Vagina (tissue), 2 donors: ENCODE measurements at regions of chr11 and their contacts with region 1.

Region 1: DNA sequence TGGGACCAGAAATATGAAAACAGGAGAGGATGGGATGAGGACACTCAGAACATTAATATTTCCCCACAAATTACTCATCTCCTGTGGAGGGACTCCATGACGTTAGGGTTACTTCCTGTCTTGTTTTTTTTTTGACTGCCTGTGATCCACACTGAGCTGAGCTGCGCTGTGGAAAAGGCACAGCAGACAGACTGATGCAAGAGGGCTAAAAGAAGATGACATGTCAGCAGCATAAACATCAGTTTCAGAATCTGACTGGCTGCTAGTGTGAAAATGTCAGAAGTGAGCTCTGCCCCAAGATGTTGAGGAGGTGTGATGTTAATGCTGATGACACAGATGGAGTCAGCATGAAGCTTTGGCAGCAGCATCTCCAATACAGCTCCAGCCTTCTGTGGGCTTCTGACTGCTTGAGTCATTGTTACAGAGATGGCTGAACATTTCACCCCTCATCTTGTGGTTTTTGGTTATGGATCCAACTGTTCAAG is 286.8 kb downstream of the BLID start:
- DNase-seq: no peak
- H3K4me3 ChIP-seq: no peak overlapping the region
- H3K27ac ChIP-seq: peak overlapping the region; percentile 3
- H3K4me1 ChIP-seq: no peaks in the 10 kb centered on the region
- H3K27me3 ChIP-seq: no peaks in the 10 kb centered on the region
- CTCF ChIP-seq: no peak
- POLR2A ChIP-seq: no peak

Region 2: DNA sequence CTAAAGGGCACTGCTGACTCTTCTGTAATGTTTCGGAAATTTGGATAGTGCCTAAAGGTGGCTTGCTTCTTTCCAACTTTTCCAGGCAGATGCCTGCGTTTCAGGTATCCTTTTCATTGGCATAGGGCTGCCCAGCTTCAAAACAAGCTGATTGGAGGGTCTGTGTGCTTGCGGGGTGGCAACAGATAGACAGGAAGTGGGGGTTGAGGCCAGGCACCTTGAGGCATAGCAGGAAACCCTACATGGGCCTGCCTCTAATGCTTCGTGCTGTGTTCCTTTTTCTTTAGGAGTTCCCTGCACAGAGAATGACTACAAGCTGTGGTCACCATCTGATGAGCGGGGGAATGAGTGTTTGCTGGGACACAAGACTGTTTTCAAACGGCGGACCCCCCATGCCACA is 284.2 kb before region 1 on chr11:
- intact Hi-C with region 1: loop called (anchors 5 kb)
- DNase-seq: peak in 1 of 2 donors; percentile 78
- H3K4me3 ChIP-seq: no peak overlapping the region
- H3K27ac ChIP-seq: no peak overlapping the region
- H3K4me1 ChIP-seq: no peaks in the 10 kb centered on the region
- H3K27me3 ChIP-seq: no peaks in the 10 kb centered on the region
- CTCF ChIP-seq: no peak
- POLR2A ChIP-seq: no peak

Region 3: DNA sequence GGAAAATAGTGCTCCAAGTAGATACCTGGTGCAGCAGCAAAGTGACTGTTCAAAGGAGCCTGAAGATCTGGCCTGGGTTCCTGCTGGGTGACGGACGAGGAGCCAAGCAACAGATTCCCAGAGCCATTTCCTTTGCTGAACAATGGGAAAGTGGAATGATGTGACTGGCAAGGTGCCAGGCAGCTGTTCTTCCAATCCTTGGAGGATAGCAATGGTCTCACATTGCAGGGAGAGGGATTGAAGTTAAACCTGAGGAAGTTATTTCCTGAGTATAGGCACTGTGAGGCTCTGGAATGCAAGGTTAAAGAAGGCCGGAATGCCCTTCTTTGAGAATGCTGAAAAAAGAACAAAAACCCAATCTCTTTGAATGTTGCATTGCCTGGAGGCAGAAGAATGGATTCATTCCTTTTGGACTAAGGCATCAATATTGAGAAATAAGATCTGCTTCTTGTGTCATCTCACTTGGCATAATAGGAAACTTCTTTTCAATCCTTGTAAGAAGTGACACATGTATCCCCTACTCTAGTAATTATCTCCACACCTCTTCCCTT is 63.0 kb after region 1 on chr11:
- intact Hi-C with region 1: no loop called
- DNase-seq: no peak
- H3K4me3 ChIP-seq: no peak overlapping the region
- H3K27ac ChIP-seq: no peak overlapping the region
- H3K4me1 ChIP-seq: no peaks in the 10 kb centered on the region
- H3K27me3 ChIP-seq: no peaks in the 10 kb centered on the region
- CTCF ChIP-seq: no peak
- POLR2A ChIP-seq: no peak

Region 4: GRCh38 chr11:121996574-121996973 is 167.4 kb after region 1 on chr11:
- intact Hi-C with region 1: no loop called
- DNase-seq: no peak
- H3K4me3 ChIP-seq: no peak overlapping the region
- H3K27ac ChIP-seq: no peak overlapping the region
- H3K4me1 ChIP-seq: no peaks in the 10 kb centered on the region
- H3K27me3 ChIP-seq: no peaks in the 10 kb centered on the region
- CTCF ChIP-seq: no peak
- POLR2A ChIP-seq: no peak